Naive thymus-derived CD4-positive, alpha-beta T cell (primary cell): ENCODE measurements at regions of chr10 and their contacts with region 1.

Region 1: DNA sequence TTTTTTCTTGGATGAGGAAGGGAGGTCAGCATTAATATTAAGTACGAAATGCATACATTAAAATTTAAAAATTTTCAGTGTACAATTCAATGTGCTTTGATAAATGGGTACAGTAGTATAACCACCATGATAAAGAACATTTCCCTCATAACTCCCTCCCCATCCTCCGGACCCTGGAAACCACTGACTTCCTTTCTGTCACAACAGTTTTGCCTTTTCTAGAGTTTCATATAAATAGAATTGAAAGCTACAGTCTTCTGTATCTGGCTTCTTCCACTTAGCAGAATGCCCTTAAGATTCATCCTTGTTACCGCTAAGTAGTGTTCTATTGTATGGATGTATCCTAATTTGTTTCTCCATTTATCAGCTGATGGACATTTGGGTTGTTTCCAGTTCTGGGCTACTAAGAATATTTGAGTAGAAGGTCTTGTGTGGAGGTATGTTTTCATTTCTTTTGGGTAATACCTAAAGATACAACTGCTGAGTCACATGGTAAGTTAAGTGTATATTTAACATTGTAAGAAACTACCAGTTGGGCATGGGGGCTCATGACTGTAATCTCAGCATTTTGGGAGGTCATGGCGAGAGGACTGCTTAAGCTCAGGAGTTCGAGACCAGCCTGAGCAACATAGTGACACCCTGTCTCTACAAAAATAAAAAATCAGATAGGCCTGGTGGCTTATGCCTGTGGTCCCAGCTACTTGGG is 30.8 kb downstream of the ABI1 start:
- DNase-seq: no peak
- ATAC-seq: no peak
- H3K4me3 ChIP-seq: no peak overlapping the region
- H3K4me3 Mint-ChIP-seq: peak overlapping the region; percentile 4 to 64 (median 34)
- H3K27ac ChIP-seq: no peak overlapping the region
- H3K27ac Mint-ChIP-seq: peak overlapping the region in 7 of 9 donors; percentile 2 to 86 (median 46)
- H3K4me1 ChIP-seq: peaks cover 11 to 12% of the 10 kb centered on the region in 2 donors
- H3K4me1 Mint-ChIP-seq: peaks cover 37 to 89% (median 66%) of the 10 kb centered on the region in 7 donors
- H3K27me3 ChIP-seq: no peaks in the 10 kb centered on the region
- H3K27me3 Mint-ChIP-seq: no peaks in the 10 kb centered on the region

Region 2: DNA sequence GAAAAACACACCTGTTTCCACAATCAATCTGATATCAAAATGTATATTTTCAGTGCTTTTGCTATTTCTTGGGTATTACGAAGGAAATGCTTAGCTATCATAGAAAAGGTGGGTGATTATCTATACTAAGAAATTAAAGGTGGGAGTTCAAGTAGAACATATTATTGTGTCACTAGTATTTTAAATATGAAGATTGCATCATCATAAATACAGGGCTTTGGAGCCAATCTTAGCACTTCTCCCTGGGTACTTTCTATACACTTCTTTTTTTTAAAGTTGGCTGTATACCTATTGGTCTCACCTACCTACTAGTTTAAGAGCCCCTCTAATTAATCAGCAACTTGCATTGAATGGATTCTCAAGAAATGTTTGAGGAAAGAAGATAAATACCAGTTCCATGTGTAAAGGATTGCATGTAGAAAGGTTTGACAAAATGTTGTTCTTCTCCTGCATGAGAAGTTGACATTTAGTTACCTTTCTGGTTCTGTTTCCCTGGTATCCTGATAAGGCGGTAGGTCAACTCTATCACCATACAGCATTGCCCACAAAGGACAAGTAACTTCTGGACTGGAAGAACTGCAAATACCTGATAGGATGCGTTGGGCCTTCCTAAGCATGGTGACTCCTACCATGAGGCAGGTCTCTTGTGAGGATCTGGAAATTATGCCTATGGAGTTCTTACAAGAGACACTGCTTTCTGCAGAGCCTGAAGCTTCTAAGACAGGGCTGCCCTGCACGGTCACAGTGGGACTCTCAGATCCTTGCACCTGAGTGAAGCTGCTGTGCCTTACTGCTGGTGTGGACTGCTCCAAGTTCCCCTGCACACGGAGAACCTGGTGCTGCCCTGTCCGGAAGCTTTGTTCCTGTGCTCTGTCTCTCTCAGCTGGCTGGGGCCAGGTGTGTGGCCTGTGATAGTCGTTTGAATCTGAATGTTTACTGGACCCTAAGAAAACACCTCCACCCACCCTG is 164.6 kb before region 1 on chr10:
- CTCF ChIA-PET with region 1: no interaction called
- POLR2A ChIA-PET with region 1: no interaction called
- intact Hi-C with region 1: no loop called
- DNase-seq: no peak
- ATAC-seq: no peak
- H3K4me3 ChIP-seq: no peak overlapping the region
- H3K4me3 Mint-ChIP-seq: no peak overlapping the region
- H3K27ac ChIP-seq: no peak overlapping the region
- H3K27ac Mint-ChIP-seq: peak overlapping the region in 1 of 9 donors; percentile 36
- H3K4me1 ChIP-seq: no peaks in the 10 kb centered on the region
- H3K4me1 Mint-ChIP-seq: peaks cover 0 to 2% (median 0%) of the 10 kb centered on the region in 7 donors
- H3K27me3 ChIP-seq: no peaks in the 10 kb centered on the region
- H3K27me3 Mint-ChIP-seq: peaks cover 0 to 16% (median 8%) of the 10 kb centered on the region in 5 donors

Region 3: DNA sequence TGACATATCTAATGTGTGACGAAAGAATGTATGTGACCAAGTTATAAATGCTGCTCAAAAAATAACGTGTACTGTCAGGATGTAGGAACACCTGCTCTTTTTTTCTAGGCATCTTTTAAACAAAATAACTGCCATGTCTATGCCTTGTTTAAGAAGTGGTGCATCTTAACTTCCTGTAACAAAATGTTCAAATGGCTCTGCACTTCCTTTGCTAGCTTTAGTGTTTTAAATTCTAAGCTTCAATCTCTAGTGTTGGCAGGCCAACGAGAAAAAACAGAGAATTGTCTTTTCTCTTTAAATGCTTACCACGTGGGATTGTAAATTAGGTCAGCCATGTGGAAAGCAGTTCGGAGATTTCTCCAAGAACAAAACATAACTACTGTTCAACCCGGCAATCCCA is 147.0 kb before region 1 on chr10:
- CTCF ChIA-PET with region 1: no interaction called
- POLR2A ChIA-PET with region 1: no interaction called
- intact Hi-C with region 1: no loop called
- DNase-seq: peak in 7 of 9 donors; percentile 65 to 91 (median 85)
- ATAC-seq: peak; percentile 91
- H3K4me3 ChIP-seq: no peak overlapping the region
- H3K4me3 Mint-ChIP-seq: peak overlapping the region in 9 of 10 donors; percentile 26 to 83 (median 71)
- H3K27ac ChIP-seq: peak overlapping the region; percentile 69
- H3K27ac Mint-ChIP-seq: peak overlapping the region in 8 of 9 donors; percentile 94 to 99 (median 97)
- H3K4me1 ChIP-seq: peaks cover 0 to 33% of the 10 kb centered on the region in 2 donors
- H3K4me1 Mint-ChIP-seq: peaks cover 14 to 63% (median 39%) of the 10 kb centered on the region in 7 donors
- H3K27me3 ChIP-seq: no peaks in the 10 kb centered on the region
- H3K27me3 Mint-ChIP-seq: peaks cover 0 to 9% (median 0%) of the 10 kb centered on the region in 5 donors

Region 4: DNA sequence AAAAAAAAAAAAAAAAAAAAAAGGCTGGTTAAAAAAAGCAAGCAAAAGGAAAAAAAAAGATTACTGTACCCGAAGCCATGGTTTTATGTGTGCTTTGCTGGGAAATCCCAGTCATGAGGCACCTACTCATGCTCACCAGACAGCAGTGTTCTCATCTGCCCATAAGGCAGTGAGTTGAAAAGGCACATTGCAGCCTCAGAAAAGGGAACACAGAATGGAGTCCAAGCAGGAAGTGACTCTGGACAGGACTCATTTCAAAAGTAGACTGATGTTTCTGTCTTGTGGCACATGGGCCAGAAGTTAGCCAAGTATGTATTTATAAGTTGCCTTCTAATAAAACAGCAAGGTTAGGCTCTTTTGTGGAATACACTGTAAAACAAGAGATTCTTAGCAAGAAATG is 92.2 kb before region 1 on chr10:
- CTCF ChIA-PET with region 1: no interaction called
- POLR2A ChIA-PET with region 1: no interaction called
- intact Hi-C with region 1: no loop called
- DNase-seq: peak in 1 of 9 donors; percentile 51
- ATAC-seq: peak; percentile 84
- H3K4me3 ChIP-seq: no peak overlapping the region
- H3K4me3 Mint-ChIP-seq: peak overlapping the region in 1 of 10 donors; percentile 7
- H3K27ac ChIP-seq: no peak overlapping the region
- H3K27ac Mint-ChIP-seq: peak overlapping the region in 7 of 9 donors; percentile 46 to 89 (median 69)
- H3K4me1 ChIP-seq: no peaks in the 10 kb centered on the region
- H3K4me1 Mint-ChIP-seq: peaks cover 0 to 59% (median 0%) of the 10 kb centered on the region in 7 donors
- H3K27me3 ChIP-seq: no peaks in the 10 kb centered on the region
- H3K27me3 Mint-ChIP-seq: no peaks in the 10 kb centered on the region

Region 5: DNA sequence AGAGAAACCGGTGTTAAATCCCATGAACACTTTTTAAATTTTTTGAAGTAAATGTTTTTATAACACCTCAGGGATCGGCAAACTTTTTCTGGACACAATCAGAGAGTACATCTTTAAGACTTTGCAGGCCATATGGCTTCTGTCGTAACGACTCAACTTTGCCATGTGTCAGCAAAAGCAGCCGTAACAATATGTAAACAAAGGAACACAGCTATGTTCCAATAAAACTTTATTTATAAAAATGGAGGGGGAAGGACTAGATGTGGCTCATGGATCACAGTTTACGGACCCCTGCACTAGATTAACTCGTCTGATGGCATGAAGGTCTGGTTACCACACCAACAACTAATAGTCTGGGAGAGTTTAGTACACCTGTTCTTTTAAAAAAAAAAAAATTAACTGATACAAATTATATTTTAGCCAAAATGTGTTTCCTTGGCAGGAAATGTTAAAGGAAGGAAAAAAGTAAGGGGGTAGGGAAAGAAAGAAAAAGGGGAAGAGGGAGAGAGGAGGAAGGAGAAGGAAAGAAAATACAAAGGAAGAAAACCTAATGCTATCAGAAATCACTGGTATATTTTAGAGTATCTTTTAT is 19.4 kb before region 1 on chr10:
- CTCF ChIA-PET with region 1: no interaction called
- POLR2A ChIA-PET with region 1: no interaction called
- intact Hi-C with region 1: no loop called
- DNase-seq: no peak
- ATAC-seq: no peak
- H3K4me3 ChIP-seq: no peak overlapping the region
- H3K4me3 Mint-ChIP-seq: no peak overlapping the region
- H3K27ac ChIP-seq: no peak overlapping the region
- H3K27ac Mint-ChIP-seq: peak overlapping the region in 1 of 9 donors; percentile 55
- H3K4me1 ChIP-seq: peaks cover 11 to 13% of the 10 kb centered on the region in 2 donors
- H3K4me1 Mint-ChIP-seq: peaks cover 31 to 86% (median 76%) of the 10 kb centered on the region in 7 donors
- H3K27me3 ChIP-seq: no peaks in the 10 kb centered on the region
- H3K27me3 Mint-ChIP-seq: no peaks in the 10 kb centered on the region

Region 6: DNA sequence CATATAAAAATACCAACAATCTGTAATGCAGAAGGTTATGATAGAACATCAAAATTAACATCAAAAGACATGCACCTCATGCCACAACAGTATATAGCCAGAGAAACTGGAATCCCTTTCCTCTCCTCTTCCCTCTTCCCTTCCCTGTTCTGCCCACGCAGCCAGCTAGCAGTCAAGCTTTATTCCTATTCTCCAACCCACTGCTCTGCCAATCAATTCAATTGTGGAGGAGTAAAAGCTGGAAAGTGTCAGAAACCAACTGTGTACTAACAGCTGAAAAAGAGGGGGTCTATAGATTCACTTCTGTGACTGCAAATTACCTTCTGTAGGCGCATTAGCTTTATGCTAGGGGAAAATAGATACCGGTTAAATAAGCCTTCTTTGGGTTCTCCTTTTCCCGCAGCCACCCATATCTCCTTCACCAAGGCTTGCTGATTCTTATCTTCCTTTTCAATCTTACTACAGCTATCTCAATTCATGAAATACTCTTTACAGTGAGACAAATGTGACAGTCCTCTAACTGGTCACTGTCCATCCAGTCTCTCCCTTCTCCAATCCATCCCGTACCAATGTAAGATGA is 14.5 kb after region 1 on chr10:
- CTCF ChIA-PET with region 1: interaction called, 5 read pairs
- POLR2A ChIA-PET with region 1: no interaction called
- intact Hi-C with region 1: loop called in 1 of 2 experiments (anchors 2 kb)
- DNase-seq: no peak
- ATAC-seq: no peak
- H3K4me3 ChIP-seq: no peak overlapping the region
- H3K4me3 Mint-ChIP-seq: peak overlapping the region in 9 of 10 donors; percentile 6 to 69 (median 41)
- H3K27ac ChIP-seq: no peak overlapping the region
- H3K27ac Mint-ChIP-seq: peak overlapping the region in 7 of 9 donors; percentile 2 to 68 (median 29)
- H3K4me1 ChIP-seq: peaks cover 32% of the 10 kb centered on the region in 2 donors
- H3K4me1 Mint-ChIP-seq: peaks cover 44 to 88% (median 78%) of the 10 kb centered on the region in 7 donors
- H3K27me3 ChIP-seq: no peaks in the 10 kb centered on the region
- H3K27me3 Mint-ChIP-seq: no peaks in the 10 kb centered on the region